Activated CD4-positive, alpha-beta T cell treated with anti-CD3 and anti-CD28 coated beads for 36 hours (primary cell): ENCODE measurements at regions of chr12 and their contacts with region 1.

Region 1: GRCh38 chr12:131710464-131711457 is at the start of gene SFSWAP:
- DNase-seq: peak; percentile 85
- ATAC-seq: peak; percentile 92
- H3K4me3 Mint-ChIP-seq: peak within 1 kb of the TSS; percentile 98
- H3K27ac Mint-ChIP-seq: peak within 1 kb of the TSS; percentile 97
- H3K4me1 Mint-ChIP-seq: peaks cover 24% of the 10 kb centered on the region
- H3K27me3 Mint-ChIP-seq: no peaks in the 10 kb centered on the region
- total RNA-seq, gene SFSWAP: 47.9 to 73.1 TPM

Region 2: DNA sequence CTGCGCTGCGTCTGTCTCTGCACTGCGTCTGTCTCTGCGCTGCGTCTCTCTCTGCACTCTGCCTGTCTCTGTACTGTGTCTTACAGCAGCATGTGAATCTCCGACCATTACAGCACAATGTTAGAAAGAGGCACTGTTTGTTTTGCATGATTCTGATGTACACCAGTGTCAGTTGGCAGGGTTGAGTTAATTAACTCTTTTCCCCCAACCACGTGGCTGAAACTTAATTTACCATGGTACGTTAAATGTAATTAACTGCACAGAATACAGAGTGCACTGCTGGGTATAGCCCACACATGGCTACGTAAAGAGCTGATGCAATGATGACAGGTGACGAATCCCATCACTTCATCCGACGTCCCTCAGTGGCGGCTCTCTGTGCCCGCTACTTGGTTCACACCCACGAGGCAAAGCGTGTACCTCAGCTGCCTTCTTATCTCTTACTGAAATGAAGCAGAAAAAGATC is 127.5 kb before region 1 on chr12:
- CTCF ChIA-PET with region 1: no interaction called
- POLR2A ChIA-PET with region 1: no interaction called
- intact Hi-C with region 1: no loop called
- DNase-seq: no peak
- ATAC-seq: no peak
- H3K4me3 Mint-ChIP-seq: no peak overlapping the region
- H3K27ac Mint-ChIP-seq: no peak overlapping the region
- H3K4me1 Mint-ChIP-seq: no peaks in the 10 kb centered on the region
- H3K27me3 Mint-ChIP-seq: peaks cover 15% of the 10 kb centered on the region

Region 3: GRCh38 chr12:131608740-131609690 is 101.7 kb before region 1 on chr12:
- CTCF ChIA-PET with region 1: no interaction called
- POLR2A ChIA-PET with region 1: interaction called, 3 read pairs
- intact Hi-C with region 1: loop called (anchors 2 kb)
- DNase-seq: peak; percentile 79
- ATAC-seq: peak; percentile 40
- H3K4me3 Mint-ChIP-seq: no peak overlapping the region
- H3K27ac Mint-ChIP-seq: no peak overlapping the region
- H3K4me1 Mint-ChIP-seq: peaks cover 48% of the 10 kb centered on the region
- H3K27me3 Mint-ChIP-seq: no peaks in the 10 kb centered on the region

Region 4: GRCh38 chr12:131628025-131628875 is 82.5 kb before region 1 on chr12:
- CTCF ChIA-PET with region 1: no interaction called
- POLR2A ChIA-PET with region 1: no interaction called
- intact Hi-C with region 1: no loop called
- DNase-seq: no peak
- ATAC-seq: no peak
- H3K4me3 Mint-ChIP-seq: peak overlapping the region; percentile 46
- H3K27ac Mint-ChIP-seq: no peak overlapping the region
- H3K4me1 Mint-ChIP-seq: peaks cover 6% of the 10 kb centered on the region
- H3K27me3 Mint-ChIP-seq: peaks cover 7% of the 10 kb centered on the region

Region 5: DNA sequence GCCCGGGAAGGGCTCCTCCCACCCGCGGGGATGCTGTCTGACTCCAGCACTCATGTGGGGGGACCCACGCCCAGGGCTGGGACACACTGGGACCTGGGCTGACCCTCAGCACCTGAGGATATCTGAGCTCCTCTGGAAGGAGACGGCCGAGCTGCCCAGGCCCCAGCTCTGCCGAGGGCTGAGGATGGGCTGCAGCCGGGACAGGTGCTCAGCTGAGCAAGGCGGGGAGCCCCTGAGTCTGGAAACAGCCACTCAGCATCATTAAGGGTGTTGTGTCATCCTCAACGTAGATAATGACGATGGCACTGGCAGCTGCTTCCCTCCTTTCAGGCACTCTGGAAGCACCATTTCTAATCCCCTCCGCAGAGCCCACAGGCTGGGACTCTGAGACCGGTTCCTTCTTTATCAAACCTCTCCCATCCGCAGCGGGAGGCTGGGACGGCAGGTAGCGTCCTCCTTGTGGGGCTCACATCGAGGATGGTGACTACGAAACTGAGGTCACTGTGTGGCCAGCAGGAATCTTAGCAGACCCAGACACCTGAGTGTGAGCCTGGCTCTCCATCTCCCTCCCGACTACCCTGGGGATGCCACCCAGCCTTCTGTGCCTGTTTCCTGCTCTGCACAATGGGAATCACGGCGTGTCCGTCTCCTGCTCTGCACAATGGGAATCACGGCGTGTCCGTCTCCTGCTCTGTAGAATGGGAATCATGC is 26.6 kb before region 1 on chr12:
- CTCF ChIA-PET with region 1: no interaction called
- POLR2A ChIA-PET with region 1: no interaction called
- intact Hi-C with region 1: loop called in 1 of 2 experiments (anchors 1 kb)
- DNase-seq: peak; percentile 25
- ATAC-seq: no peak
- H3K4me3 Mint-ChIP-seq: no peak overlapping the region
- H3K27ac Mint-ChIP-seq: no peak overlapping the region
- H3K4me1 Mint-ChIP-seq: peaks cover 14% of the 10 kb centered on the region
- H3K27me3 Mint-ChIP-seq: peaks cover 5% of the 10 kb centered on the region

Region 6: GRCh38 chr12:131737142-131737827 is 26.5 kb after region 1 on chr12:
- CTCF ChIA-PET with region 1: no interaction called
- POLR2A ChIA-PET with region 1: no interaction called
- intact Hi-C with region 1: no loop called
- DNase-seq: no peak
- ATAC-seq: no peak
- H3K4me3 Mint-ChIP-seq: no peak overlapping the region
- H3K27ac Mint-ChIP-seq: no peak overlapping the region
- H3K4me1 Mint-ChIP-seq: no peaks in the 10 kb centered on the region
- H3K27me3 Mint-ChIP-seq: no peaks in the 10 kb centered on the region

Region 7: GRCh38 chr12:131830335-131830913 is 119.7 kb after region 1 on chr12:
- CTCF ChIA-PET with region 1: no interaction called
- POLR2A ChIA-PET with region 1: no interaction called
- intact Hi-C with region 1: loop called in 1 of 2 experiments (anchors 2 kb)
- DNase-seq: peak; percentile 69
- ATAC-seq: peak; percentile 63
- H3K4me3 Mint-ChIP-seq: peak overlapping the region; percentile 12
- H3K27ac Mint-ChIP-seq: no peak overlapping the region
- H3K4me1 Mint-ChIP-seq: peaks cover 11% of the 10 kb centered on the region
- H3K27me3 Mint-ChIP-seq: peaks cover 39% of the 10 kb centered on the region

Region 8: DNA sequence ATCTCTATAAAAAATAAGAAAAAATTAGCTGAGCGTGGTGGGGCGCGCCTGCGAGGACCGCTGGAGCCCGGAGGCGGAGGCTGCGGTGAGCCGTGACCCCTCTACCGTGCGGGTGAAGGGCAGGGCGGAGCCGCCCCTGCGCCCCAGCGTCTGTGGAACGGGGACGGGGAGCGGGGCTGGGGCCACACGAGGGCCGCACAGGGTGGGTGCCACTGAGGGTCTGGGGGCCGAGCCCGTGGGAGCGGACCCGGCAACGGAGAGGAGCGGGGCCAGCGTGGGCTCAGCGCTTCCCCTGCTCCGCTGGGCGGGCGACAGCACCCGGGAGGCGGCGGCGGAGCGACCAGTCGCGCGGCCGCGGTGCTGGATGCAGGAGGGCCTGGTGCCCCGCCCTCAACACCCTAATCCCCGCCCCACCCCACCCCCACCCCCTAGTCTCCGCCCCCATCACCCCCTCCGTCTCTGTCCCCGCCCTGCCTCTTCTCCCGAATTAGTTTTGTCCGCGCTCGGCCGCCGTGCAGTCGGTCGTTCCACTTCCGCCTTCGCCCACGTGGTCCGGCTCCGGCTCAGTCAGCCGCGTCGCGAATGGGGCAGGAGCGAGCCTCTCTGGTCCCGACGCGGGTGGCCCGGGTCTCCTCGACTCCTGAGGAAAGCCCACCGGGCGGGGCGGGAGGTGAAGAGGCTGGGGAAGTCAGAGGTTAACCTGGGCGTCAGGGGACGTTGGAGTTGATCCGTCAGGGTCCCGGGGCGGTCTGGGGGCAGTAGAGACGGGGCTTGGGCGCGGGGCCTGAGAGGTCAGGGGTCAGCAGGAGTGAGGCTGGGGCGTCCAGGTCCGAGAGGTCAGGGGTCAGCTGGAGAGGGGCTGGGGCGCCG is 218.2 kb after region 1 on chr12 and contains the start of gene PUS1:
- CTCF ChIA-PET with region 1: no interaction called
- POLR2A ChIA-PET with region 1: no interaction called
- intact Hi-C with region 1: loop called in 1 of 2 experiments (anchors 1 kb)
- DNase-seq: peak; percentile 97
- ATAC-seq: peak; percentile 89
- H3K4me3 Mint-ChIP-seq: peak within 1 kb of the TSS; percentile 97
- H3K27ac Mint-ChIP-seq: peak within 1 kb of the TSS; percentile 85
- H3K4me1 Mint-ChIP-seq: peaks cover 25% of the 10 kb centered on the region
- H3K27me3 Mint-ChIP-seq: no peaks in the 10 kb centered on the region
- total RNA-seq, gene PUS1: 37.8 to 56.5 TPM